Activated CD4-positive, alpha-beta memory T cell treated with anti-CD3 and anti-CD28 coated beads for 36 hours (primary cell): ENCODE measurements at regions of chr5 and their contacts with region 1.

Region 1: DNA sequence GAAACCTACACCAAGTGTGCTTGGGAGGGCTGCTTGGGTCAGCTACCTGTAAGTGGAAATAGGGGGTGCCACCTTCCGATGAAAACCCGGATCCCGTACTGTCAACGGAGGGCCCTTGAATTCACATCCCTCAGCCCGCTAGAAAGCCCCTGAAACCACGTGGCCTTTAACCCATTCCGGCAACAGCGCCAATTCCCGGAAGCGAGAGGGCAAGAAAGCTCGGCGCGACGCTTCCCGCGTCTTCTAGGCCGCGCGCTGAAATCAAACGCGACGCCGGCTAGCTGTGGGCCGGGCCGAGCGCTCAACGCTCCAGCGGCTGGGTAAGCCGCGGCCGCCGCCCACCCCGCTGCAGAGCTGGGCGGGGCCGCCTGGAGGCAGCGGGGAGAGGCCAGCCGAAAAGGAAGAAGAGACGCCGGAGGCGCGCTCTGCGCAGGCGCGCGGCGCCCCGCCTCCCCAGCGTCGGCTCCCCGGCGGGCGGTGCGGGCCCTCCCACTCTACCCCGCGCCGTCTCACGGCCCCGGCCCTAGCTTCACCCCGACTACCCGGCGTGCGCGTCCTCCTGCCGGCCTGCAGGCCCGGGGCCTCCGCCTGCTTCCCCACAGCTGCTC is at the start of gene KIF2A:
- DNase-seq: peak; percentile 96
- H3K4me3 Mint-ChIP-seq: peak within 1 kb of the TSS; percentile 98
- H3K27ac Mint-ChIP-seq: peak within 1 kb of the TSS; percentile 98
- H3K4me1 Mint-ChIP-seq: peaks cover 48% of the 10 kb centered on the region
- H3K27me3 Mint-ChIP-seq: no peaks in the 10 kb centered on the region
- total RNA-seq, gene KIF2A: 209 TPM

Region 2: DNA sequence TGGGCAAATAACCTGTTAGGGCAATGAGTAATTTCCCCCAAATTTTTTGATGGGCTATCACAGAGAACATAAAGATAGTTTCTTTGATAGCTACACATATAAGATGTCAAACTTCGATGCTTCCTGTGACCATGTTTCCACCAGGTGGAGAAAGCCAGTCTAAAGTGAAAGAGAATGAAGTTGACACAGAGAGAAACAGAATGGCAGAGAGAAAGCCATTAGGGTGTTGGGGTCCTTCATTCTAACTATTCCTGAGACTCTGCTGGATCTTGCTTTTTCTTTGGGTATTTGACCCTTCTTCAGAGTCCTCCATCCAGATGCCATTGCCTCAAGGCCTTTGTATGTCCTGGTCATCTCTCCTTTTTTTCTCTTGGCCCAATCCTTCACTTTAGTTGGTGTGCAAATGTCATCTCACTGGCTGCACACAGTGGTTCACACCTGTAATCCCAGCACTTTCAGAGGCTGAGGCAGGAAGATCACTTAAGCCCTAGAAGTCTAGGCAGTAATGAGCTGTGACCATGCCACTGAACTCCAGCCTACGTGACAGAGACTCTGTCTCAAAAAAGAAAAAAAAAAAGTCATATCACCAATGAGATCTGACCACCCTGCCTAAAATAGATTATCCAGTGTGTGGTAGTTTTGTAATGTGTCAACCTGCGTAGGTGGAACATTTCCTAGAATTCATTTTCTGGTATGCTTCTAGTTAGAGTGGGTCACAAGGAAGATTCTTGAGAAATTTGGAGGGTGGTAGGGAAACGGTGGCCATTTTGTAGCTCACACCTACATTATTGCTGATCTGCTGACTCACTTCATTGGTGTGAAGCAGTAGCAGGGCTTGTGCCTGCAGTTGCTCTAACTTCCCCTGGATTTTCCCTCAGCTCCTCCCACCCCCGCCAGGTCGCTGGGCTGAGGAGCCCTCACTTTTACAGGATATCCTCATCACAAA is 20.6 kb before region 1 on chr5:
- CTCF ChIA-PET with region 1: interaction called, 16 read pairs
- POLR2A ChIA-PET with region 1: interaction called, 38 read pairs
- intact Hi-C with region 1: loop called (anchors 1 kb)
- DNase-seq: peak; percentile 85
- H3K4me3 Mint-ChIP-seq: peak overlapping the region; percentile 36
- H3K27ac Mint-ChIP-seq: peak overlapping the region; percentile 98
- H3K4me1 Mint-ChIP-seq: peaks cover 72% of the 10 kb centered on the region
- H3K27me3 Mint-ChIP-seq: no peaks in the 10 kb centered on the region

Region 3: DNA sequence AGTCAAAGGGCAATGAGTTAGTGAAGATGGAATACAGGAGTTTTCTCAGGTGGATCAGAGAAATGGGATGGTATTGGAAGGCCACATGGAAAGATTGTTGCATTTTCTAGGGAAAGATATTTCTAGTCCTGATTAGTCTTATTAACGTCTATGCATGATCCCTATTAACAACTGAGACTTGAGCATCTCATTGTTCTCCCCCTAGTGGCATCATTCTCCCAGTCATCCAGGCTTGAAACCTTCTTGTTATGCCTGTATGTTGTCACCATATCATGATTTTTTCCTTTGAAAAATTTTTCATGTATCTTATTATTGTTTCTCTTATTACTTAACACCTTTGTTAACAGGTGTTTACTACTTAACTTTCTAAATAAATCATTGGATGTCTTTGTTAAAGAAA is 34.6 kb after region 1 on chr5:
- CTCF ChIA-PET with region 1: interaction called, 3 read pairs
- POLR2A ChIA-PET with region 1: interaction called, 4 read pairs
- intact Hi-C with region 1: loop called (anchors 2 kb)
- DNase-seq: no peak
- H3K4me3 Mint-ChIP-seq: no peak overlapping the region
- H3K27ac Mint-ChIP-seq: no peak overlapping the region
- H3K4me1 Mint-ChIP-seq: peaks cover 66% of the 10 kb centered on the region
- H3K27me3 Mint-ChIP-seq: no peaks in the 10 kb centered on the region

Region 4: GRCh38 chr5:62395210-62395950 is 89.6 kb after region 1 on chr5:
- CTCF ChIA-PET with region 1: no interaction called
- POLR2A ChIA-PET with region 1: no interaction called
- intact Hi-C with region 1: loop called (anchors 2 kb)
- DNase-seq: peak; percentile 22
- H3K4me3 Mint-ChIP-seq: no peak overlapping the region
- H3K27ac Mint-ChIP-seq: peak overlapping the region; percentile 80
- H3K4me1 Mint-ChIP-seq: peaks cover 43% of the 10 kb centered on the region
- H3K27me3 Mint-ChIP-seq: no peaks in the 10 kb centered on the region

Region 5: GRCh38 chr5:62412537-62413329 is 106.9 kb after region 1 on chr5 and contains the start of gene IPO11:
- CTCF ChIA-PET with region 1: no interaction called
- POLR2A ChIA-PET with region 1: interaction called, 3 read pairs
- intact Hi-C with region 1: loop called (anchors 1 kb)
- DNase-seq: peak; percentile 100
- H3K4me3 Mint-ChIP-seq: peak within 1 kb of the TSS; percentile 87
- H3K27ac Mint-ChIP-seq: peak within 1 kb of the TSS; percentile 88
- H3K4me1 Mint-ChIP-seq: peaks cover 23% of the 10 kb centered on the region
- H3K27me3 Mint-ChIP-seq: peaks cover 2% of the 10 kb centered on the region
- total RNA-seq, gene IPO11: 55.4 to 59.2 TPM